ENCODE measurements at regions of chr5 and their contacts with region 1.

Region 1: GRCh38 chr5:66840511-66841013 is 244.4 kb downstream of the MAST4 start:
- DNase-seq: peak; percentile 68
- ATAC-seq: peak; percentile 86
- H3K4me3 Mint-ChIP-seq: no peak overlapping the region
- H3K27ac Mint-ChIP-seq: peak overlapping the region; percentile 67
- H3K4me1 Mint-ChIP-seq: peaks cover 47% of the 10 kb centered on the region
- H3K27me3 Mint-ChIP-seq: peaks cover 20% of the 10 kb centered on the region

Region 2: DNA sequence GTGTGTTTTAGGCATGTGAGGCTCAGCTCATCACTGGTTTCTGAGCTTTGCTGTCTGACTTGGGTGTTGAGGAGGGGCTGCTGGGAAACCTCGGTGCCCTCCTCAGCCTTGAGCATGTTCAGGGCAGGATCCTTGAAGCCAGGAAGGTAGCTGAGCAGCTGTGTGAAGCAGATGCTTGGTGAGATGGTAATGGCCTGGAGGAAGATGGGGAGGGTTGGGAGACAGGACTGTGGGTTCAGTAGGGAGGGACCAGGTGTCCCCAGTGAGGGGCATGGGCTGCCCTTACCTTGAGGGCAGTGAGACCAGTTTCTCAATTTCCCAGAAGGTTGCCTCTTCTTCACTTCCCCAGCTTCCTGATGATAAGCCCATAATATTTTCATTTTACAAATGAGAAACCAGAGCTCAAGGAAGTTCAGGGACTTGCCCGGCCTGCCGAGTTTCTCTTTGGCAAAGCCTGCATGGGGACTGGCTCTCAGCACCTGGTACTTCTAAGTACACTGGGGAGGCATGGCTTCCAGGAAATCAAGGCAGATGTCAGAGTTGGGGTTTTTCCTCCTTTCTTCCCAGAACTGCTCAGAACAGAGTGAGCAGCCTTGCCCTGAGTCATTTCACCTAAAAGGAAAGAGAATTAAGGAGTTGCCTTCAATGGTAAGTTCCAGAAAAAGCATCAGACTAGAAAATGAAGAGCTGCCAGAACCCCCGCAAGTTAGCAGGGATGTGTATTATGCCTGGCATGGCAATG is 18.7 kb before region 1 on chr5:
- CTCF ChIA-PET with region 1: interaction called, 3 read pairs
- POLR2A ChIA-PET with region 1: no interaction called
- intact Hi-C with region 1: loop called in 1 of 2 experiments (anchors 2 kb)
- DNase-seq: peak; percentile 70
- ATAC-seq: peak; percentile 86
- H3K4me3 Mint-ChIP-seq: peak overlapping the region; percentile 18
- H3K27ac Mint-ChIP-seq: peak overlapping the region; percentile 86
- H3K4me1 Mint-ChIP-seq: peaks cover 28% of the 10 kb centered on the region
- H3K27me3 Mint-ChIP-seq: peaks cover 2% of the 10 kb centered on the region

Region 3: DNA sequence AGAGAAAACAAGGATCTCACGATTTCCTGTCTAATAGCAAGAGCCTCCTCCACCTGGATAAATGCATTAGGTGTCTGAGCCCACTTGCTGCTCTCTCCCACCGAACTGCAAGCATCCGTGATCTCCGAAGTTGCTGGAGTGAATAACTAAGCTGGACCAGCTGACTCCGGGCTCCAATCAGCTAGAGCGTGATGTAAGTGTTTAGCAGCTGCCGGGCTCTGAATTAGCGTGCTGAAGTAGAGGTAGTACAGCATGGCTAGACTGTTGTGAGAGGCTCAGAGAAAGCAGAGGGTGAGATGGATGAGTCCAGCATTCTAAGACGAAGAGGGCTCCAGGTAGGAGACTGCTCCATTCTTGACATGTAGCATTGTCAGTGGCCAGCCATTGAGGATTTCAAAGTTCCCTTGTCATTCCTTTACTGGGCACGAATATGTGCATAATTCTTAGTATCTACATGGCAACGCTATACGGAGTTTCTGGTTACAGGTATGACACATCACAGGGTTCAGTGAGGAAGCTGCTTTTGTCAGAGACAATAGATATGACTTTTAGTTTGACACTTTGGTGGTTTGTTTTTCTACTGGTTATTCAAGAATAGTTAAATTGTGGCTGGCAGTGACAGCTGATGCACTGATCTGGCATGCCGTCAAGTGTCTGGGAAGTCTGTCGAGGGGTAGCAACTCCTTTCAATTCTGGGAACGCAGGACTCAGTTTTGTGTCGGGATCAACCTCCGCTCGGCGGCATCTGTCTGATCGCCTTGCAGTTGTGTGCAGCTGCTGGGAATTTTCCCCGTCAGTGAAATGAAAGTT is 11.8 kb before region 1 on chr5:
- CTCF ChIA-PET with region 1: interaction called, 26 read pairs
- POLR2A ChIA-PET with region 1: interaction called, 14 read pairs
- intact Hi-C with region 1: loop called (anchors 1 kb)
- DNase-seq: peak; percentile 82
- ATAC-seq: peak; percentile 93
- H3K4me3 Mint-ChIP-seq: peak overlapping the region; percentile 82
- H3K27ac Mint-ChIP-seq: peak overlapping the region; percentile 83
- H3K4me1 Mint-ChIP-seq: peaks cover 25% of the 10 kb centered on the region
- H3K27me3 Mint-ChIP-seq: peaks cover 27% of the 10 kb centered on the region